H1 (cell line): ENCODE measurements at regions of chr22 and their contacts with region 1.

Region 1: GRCh38 chr22:43273902-43274484 is 69.2 kb downstream of the SCUBE1 start:
- DNase-seq: peak; percentile 41 to 69
- H3K4me3 ChIP-seq: no peak overlapping the region
- H3K27ac ChIP-seq: no peak overlapping the region
- H3K4me1 ChIP-seq: peaks cover 3 to 20% (median 14%) of the 10 kb centered on the region in 4 experiments; a peak in 6 of 7 replicates
- H3K27me3 ChIP-seq: no peaks in the 10 kb centered on the region; a peak in 1 of 7 replicates
- CTCF ChIP-seq: peak; percentile 72 to 93 (median 86)
- EP300 ChIP-seq: no peak
- POLR2A ChIP-seq: no peak
- RAD21 ChIP-seq: peak; percentile 95 to 98

Region 2: GRCh38 chr22:43230971-43231723 is 42.8 kb before region 1 on chr22:
- CTCF ChIA-PET with region 1: interaction called, 388 read pairs
- POLR2A ChIA-PET with region 1: no interaction called
- DNase-seq: peak; percentile 66 to 92
- H3K4me3 ChIP-seq: peak overlapping the region in 3 of 4 experiments; percentile 40 to 54 (median 52); a peak in 6 of 8 replicates
- H3K27ac ChIP-seq: no peak overlapping the region
- H3K4me1 ChIP-seq: peaks cover 0 to 19% (median 13%) of the 10 kb centered on the region in 4 experiments; a peak in 6 of 7 replicates
- H3K27me3 ChIP-seq: no peaks in the 10 kb centered on the region
- CTCF ChIP-seq: peak; percentile 88 to 94 (median 89)
- EP300 ChIP-seq: no peak
- POLR2A ChIP-seq: no peak
- RAD21 ChIP-seq: peak; percentile 84 to 88

Region 3: GRCh38 chr22:43263645-43264514 is 10.1 kb before region 1 on chr22:
- CTCF ChIA-PET with region 1: interaction called, 173 read pairs
- POLR2A ChIA-PET with region 1: interaction called, 5 read pairs
- DNase-seq: no peak
- H3K4me3 ChIP-seq: no peak overlapping the region
- H3K27ac ChIP-seq: no peak overlapping the region
- H3K4me1 ChIP-seq: peaks cover 0 to 2% (median under 1%) of the 10 kb centered on the region in 4 experiments; a peak in 2 of 7 replicates
- H3K27me3 ChIP-seq: no peaks in the 10 kb centered on the region
- CTCF ChIP-seq: no peak
- EP300 ChIP-seq: no peak
- POLR2A ChIP-seq: no peak
- RAD21 ChIP-seq: no peak

Region 4: GRCh38 chr22:43308060-43308830 is 34.3 kb after region 1 on chr22:
- CTCF ChIA-PET with region 1: interaction called, 116 read pairs
- POLR2A ChIA-PET with region 1: no interaction called
- DNase-seq: no peak
- H3K4me3 ChIP-seq: no peak overlapping the region
- H3K27ac ChIP-seq: no peak overlapping the region
- H3K4me1 ChIP-seq: no peaks in the 10 kb centered on the region; a peak in 1 of 7 replicates
- H3K27me3 ChIP-seq: no peaks in the 10 kb centered on the region; a peak in 1 of 7 replicates
- CTCF ChIP-seq: no peak
- EP300 ChIP-seq: no peak
- POLR2A ChIP-seq: no peak
- RAD21 ChIP-seq: no peak

Region 5: GRCh38 chr22:43319661-43320486 is 45.9 kb after region 1 on chr22:
- CTCF ChIA-PET with region 1: interaction called, 13 read pairs
- POLR2A ChIA-PET with region 1: no interaction called
- DNase-seq: no peak
- H3K4me3 ChIP-seq: no peak overlapping the region
- H3K27ac ChIP-seq: no peak overlapping the region
- H3K4me1 ChIP-seq: peaks cover 0 to 4% (median 0%) of the 10 kb centered on the region in 4 experiments; a peak in 2 of 7 replicates
- H3K27me3 ChIP-seq: no peaks in the 10 kb centered on the region; a peak in 1 of 7 replicates
- CTCF ChIP-seq: no peak
- EP300 ChIP-seq: no peak
- POLR2A ChIP-seq: no peak
- RAD21 ChIP-seq: no peak

Region 6: DNA sequence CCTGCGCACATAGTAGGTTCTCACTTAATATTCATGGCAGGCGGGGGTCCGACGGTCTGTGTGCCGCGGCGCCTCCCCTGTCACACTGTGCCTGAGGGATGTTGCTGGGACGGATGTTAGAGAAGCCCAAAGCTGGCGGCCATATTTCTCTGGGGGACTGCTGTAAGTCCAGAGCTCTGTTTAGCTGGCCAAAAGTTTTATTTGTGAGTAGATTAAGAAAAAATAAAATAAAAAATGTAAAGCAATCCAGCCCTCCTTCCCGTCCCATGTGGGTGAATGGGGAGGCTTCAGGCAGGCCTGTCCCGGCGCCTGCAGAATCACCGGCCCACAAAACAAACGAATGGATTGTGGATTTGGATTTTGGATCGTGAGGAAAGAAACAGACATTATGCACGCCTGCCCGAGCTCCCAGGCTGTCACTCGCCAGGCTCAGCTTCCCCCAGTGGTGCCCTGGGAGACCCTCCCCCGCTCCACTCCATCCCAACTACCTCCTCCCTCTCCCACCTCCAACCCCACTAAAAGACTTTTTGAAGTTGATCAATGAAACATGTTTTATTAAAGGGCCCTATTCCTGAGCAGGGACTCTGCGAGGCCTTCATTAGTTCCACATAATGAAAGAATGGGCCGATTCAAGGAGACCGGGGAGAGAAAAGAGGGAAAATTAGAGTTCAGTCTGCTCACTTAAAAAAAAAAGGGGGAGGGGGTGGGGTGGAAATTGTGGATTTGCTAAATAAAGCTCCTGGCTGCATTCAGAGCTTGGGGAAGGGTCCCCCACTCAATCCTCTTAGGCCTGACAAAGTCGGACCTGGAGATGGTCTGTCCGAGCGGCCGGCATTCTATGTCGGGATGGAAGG is 89.5 kb after region 1 on chr22:
- CTCF ChIA-PET with region 1: interaction called, 26 read pairs
- POLR2A ChIA-PET with region 1: no interaction called
- DNase-seq: no peak
- H3K4me3 ChIP-seq: no peak overlapping the region
- H3K27ac ChIP-seq: no peak overlapping the region
- H3K4me1 ChIP-seq: peaks cover 0 to 4% (median under 1%) of the 10 kb centered on the region in 4 experiments; a peak in 4 of 7 replicates
- H3K27me3 ChIP-seq: no peaks in the 10 kb centered on the region
- CTCF ChIP-seq: no peak
- EP300 ChIP-seq: no peak
- POLR2A ChIP-seq: no peak
- RAD21 ChIP-seq: no peak

Region 7: GRCh38 chr22:43385770-43386641 is 112.0 kb after region 1 on chr22:
- CTCF ChIA-PET with region 1: interaction called, 257 read pairs
- POLR2A ChIA-PET with region 1: interaction called, 4 read pairs
- DNase-seq: peak; percentile 53 to 90
- H3K4me3 ChIP-seq: no peak overlapping the region
- H3K27ac ChIP-seq: no peak overlapping the region
- H3K4me1 ChIP-seq: peaks cover 0 to 9% (median 2%) of the 10 kb centered on the region in 4 experiments; a peak in 3 of 7 replicates
- H3K27me3 ChIP-seq: peaks cover 0 to 12% (median 3%) of the 10 kb centered on the region in 4 experiments; a peak in 5 of 7 replicates
- CTCF ChIP-seq: peak; percentile 95 to 96 (median 96)
- EP300 ChIP-seq: no peak
- POLR2A ChIP-seq: no peak
- RAD21 ChIP-seq: peak; percentile 100

Region 8: DNA sequence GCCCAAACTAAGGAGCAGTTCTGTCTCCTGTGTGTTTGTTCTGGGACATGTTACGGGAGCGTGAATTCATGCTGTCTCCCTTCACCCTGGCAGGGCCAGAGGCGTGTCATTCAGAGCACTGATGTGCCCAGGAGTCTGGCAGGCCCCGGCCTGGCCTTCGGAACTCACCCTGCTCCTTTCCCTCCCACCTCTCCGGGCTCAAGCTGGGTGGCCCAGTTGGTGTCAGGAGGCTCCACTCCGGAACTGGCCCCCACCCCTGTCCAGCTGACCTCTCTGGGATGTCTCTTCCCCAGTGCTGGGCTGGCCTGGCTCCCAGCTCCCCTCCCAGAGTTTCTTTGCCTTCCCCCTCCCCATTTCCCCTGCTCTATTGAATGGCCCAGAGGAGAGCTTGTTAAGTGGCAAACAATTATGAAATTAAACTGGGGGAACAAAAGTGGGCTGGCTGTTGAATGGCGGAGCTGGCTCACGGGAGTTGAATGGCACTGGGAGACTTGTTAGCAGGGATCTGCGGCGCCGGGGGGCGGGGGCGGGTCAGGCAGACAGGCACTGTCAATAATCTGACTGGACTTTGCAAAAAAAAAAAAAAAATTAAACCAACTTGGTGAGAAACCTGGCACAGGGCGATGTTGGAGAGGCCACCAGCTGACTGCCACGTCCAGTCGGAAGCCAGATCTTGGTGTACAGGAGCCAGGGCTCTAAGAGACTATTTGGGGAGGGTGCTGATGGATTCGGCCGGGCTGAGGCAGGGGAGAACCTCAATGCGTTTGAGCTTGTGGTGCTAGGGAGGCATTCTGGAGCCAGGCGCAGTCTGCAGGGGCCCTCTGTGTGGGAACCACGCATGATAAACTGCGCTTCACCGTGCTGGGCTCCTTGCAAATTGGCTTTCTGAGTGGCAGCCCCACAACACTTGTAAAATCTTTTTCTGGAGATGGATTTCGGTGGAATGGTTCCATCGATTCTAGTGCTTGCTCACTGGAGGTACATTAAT is 139.1 kb after region 1 on chr22:
- CTCF ChIA-PET with region 1: no interaction called
- POLR2A ChIA-PET with region 1: no interaction called
- DNase-seq: no peak
- H3K4me3 ChIP-seq: peak overlapping the region in 1 of 4 experiments; percentile 61; a peak in 1 of 8 replicates
- H3K27ac ChIP-seq: no peak overlapping the region
- H3K4me1 ChIP-seq: peaks cover 0 to 5% (median 2%) of the 10 kb centered on the region in 4 experiments; a peak in 6 of 7 replicates
- H3K27me3 ChIP-seq: peaks cover 14 to 46% (median 37%) of the 10 kb centered on the region in 4 experiments
- CTCF ChIP-seq: no peak
- EP300 ChIP-seq: no peak
- POLR2A ChIP-seq: no peak
- RAD21 ChIP-seq: no peak